Heart left ventricle (tissue), 16 donors: ENCODE measurements at regions of chr3 and their contacts with region 1.

Region 1: GRCh38 chr3:30984855-30985749 is 90.6 kb upstream of the GADL1 start:
- DNase-seq: no peak
- ATAC-seq: no peak
- H3K4me3 ChIP-seq: peak overlapping the region in 1 of 12 donors; percentile 15
- H3K27ac ChIP-seq: no peak overlapping the region
- H3K4me1 ChIP-seq: peaks cover 0 to 7% (median 0%) of the 10 kb centered on the region in 12 donors
- H3K27me3 ChIP-seq: no peaks in the 10 kb centered on the region
- CTCF ChIP-seq: no peak
- POLR2A ChIP-seq: no peak

Region 2: DNA sequence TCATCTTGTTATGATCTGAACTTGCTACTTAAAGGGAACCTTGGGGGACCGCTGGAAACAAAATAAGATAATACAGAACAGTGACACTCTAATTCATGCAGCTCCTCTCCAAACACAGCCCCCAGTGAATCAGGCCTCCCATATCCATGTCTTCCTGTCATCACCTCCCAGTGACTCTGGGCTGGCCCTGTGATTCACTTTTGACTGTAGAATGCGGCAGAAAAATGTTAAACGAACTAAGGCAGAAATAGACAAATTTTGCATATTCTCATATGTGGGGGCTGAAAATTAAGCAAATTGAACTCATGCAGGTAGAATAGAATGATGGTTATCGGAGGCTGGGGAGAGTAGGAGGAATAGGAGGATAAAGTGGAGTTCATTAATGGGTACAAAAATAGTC is 70.4 kb before region 1 on chr3:
- intact Hi-C with region 1: no loop called
- DNase-seq: no peak
- ATAC-seq: no peak
- H3K4me3 ChIP-seq: no peak overlapping the region
- H3K27ac ChIP-seq: no peak overlapping the region
- H3K4me1 ChIP-seq: no peaks in the 10 kb centered on the region
- H3K27me3 ChIP-seq: no peaks in the 10 kb centered on the region
- CTCF ChIP-seq: no peak
- POLR2A ChIP-seq: no peak

Region 3: DNA sequence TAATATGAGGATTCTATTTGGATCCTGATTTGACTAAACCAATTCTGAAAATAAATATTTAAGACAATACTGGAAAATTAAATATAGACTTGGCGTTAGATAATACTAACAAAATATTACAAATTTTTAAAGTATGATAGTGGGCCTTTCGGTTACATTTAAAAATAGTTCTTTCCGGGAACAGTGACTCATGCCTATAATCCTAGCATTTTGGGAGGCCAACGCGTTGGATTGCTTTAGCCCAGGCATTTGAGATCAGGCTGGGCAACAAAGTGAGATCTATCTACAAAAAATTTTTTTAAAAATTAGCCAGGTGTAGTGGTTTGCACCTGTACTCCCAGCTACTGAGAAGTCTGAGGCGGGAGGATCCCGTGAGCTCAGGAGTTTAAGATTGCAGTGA is 60.3 kb before region 1 on chr3:
- intact Hi-C with region 1: loop called in 1 of 10 experiments (anchors 10 kb)
- DNase-seq: no peak
- ATAC-seq: no peak
- H3K4me3 ChIP-seq: no peak overlapping the region
- H3K27ac ChIP-seq: no peak overlapping the region
- H3K4me1 ChIP-seq: no peaks in the 10 kb centered on the region
- H3K27me3 ChIP-seq: no peaks in the 10 kb centered on the region
- CTCF ChIP-seq: no peak
- POLR2A ChIP-seq: no peak